ENCODE measurements at regions of chr16 and their contacts with region 1.

Region 1: GRCh38 chr16:47141773-47142485 is 1.8 kb downstream of the NETO2 start:
- DNase-seq: peak; percentile 87
- ATAC-seq: peak; percentile 55
- H3K4me3 ChIP-seq: peak overlapping the region; percentile 42 to 81 (median 64)
- H3K4me3 Mint-ChIP-seq: peak overlapping the region; percentile 94
- H3K27ac ChIP-seq: no peak overlapping the region
- H3K27ac Mint-ChIP-seq: peak overlapping the region; percentile 54
- H3K4me1 ChIP-seq: peaks cover 9 to 16% of the 10 kb centered on the region in 2 donors
- H3K4me1 Mint-ChIP-seq: peaks cover 19% of the 10 kb centered on the region
- H3K27me3 ChIP-seq: peaks cover 0 to 9% (median 0%) of the 10 kb centered on the region in 4 experiments
- H3K27me3 Mint-ChIP-seq: no peaks in the 10 kb centered on the region
- CTCF ChIP-seq: peak; percentile 96

Region 2: GRCh38 chr16:46765050-46765449 is 376.9 kb before region 1 on chr16:
- CTCF ChIA-PET with region 1: no interaction called
- POLR2A ChIA-PET with region 1: no interaction called
- intact Hi-C with region 1: no loop called
- DNase-seq: no peak
- ATAC-seq: no peak
- H3K4me3 ChIP-seq: no peak overlapping the region
- H3K4me3 Mint-ChIP-seq: no peak overlapping the region
- H3K27ac ChIP-seq: no peak overlapping the region
- H3K27ac Mint-ChIP-seq: no peak overlapping the region
- H3K4me1 ChIP-seq: peaks cover 0 to 14% of the 10 kb centered on the region in 2 donors
- H3K4me1 Mint-ChIP-seq: peaks cover 14% of the 10 kb centered on the region
- H3K27me3 ChIP-seq: no peaks in the 10 kb centered on the region
- H3K27me3 Mint-ChIP-seq: no peaks in the 10 kb centered on the region
- CTCF ChIP-seq: no peak

Region 3: DNA sequence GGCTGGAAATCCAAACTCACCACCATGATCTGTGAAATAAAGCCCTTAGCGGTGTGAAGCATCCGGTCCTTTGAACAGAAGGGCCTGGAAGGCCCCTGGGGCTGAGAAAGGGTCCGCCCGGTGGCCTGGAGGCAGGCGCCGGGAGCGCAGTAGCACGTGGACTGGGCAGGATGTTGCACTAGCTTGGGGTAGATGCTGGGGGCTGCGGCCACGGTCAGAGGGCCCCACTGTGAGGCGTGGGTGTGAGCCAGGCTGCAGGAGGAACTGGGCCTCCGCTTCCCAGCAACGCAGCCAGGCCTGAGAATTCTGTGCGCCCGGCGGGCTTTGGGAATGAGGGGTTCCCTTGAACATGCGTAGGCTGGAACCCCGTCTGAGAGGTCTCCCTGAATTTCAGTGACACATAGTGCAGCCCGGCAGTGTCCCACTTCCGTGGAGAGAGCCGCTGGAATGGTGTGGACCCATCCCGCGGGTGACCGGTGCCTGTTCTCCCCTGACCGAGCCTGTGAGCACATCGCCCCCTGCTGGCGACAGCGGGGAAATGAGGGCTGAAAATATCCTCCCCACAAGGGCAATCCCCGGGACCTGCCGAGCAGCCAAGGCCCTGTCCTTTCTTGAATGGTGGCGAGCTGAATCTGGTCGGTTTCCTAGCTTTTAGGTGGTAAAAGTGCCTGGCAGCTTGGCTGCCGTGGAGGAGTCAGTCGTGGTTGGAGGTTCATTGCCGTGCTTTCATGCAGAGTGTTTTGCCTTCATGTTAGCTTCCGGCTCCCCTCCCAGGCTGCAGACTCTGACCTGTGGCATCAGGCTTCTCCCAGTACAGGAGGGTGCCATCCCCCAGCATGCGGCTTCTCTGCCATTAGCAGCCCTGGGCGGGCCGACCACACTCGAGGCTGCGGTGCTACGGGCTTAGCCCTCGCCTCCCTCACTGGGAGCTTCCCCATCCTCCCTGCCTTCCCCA is 212.3 kb before region 1 on chr16:
- CTCF ChIA-PET with region 1: interaction called, 4 read pairs
- POLR2A ChIA-PET with region 1: no interaction called
- intact Hi-C with region 1: loop called (anchors 5 kb)
- DNase-seq: peak; percentile 76
- ATAC-seq: peak; percentile 73
- H3K4me3 ChIP-seq: no peak overlapping the region
- H3K4me3 Mint-ChIP-seq: no peak overlapping the region
- H3K27ac ChIP-seq: no peak overlapping the region
- H3K27ac Mint-ChIP-seq: no peak overlapping the region
- H3K4me1 ChIP-seq: peaks cover 5 to 18% of the 10 kb centered on the region in 2 donors
- H3K4me1 Mint-ChIP-seq: peaks cover 7% of the 10 kb centered on the region
- H3K27me3 ChIP-seq: no peaks in the 10 kb centered on the region
- H3K27me3 Mint-ChIP-seq: no peaks in the 10 kb centered on the region
- CTCF ChIP-seq: peak; percentile 96

Region 4: DNA sequence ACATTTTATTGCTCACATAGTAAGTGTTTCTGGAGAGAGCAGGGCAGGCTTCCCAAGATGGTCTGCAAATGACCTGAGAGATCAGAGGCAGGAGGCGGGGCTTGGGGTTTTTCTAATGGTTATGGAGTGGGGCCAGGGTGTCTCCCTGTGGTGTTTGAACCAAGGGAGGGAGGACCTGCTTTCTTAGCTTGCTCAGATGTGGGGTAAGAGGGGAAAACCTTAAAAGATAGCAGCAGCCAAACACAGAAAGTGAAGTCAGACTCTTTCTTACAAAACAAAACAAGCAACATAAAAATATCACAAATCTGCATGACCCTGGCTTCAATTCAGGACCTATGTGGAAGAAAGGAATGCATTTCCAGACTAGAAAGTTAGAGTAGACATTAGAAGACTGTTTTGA is 145.5 kb before region 1 on chr16:
- CTCF ChIA-PET with region 1: no interaction called
- POLR2A ChIA-PET with region 1: no interaction called
- intact Hi-C with region 1: no loop called
- DNase-seq: no peak
- ATAC-seq: no peak
- H3K4me3 ChIP-seq: no peak overlapping the region
- H3K4me3 Mint-ChIP-seq: no peak overlapping the region
- H3K27ac ChIP-seq: no peak overlapping the region
- H3K27ac Mint-ChIP-seq: no peak overlapping the region
- H3K4me1 ChIP-seq: no peaks in the 10 kb centered on the region
- H3K4me1 Mint-ChIP-seq: no peaks in the 10 kb centered on the region
- H3K27me3 ChIP-seq: peaks cover 0 to 7% (median 0%) of the 10 kb centered on the region in 4 experiments
- H3K27me3 Mint-ChIP-seq: no peaks in the 10 kb centered on the region
- CTCF ChIP-seq: no peak

Region 5: DNA sequence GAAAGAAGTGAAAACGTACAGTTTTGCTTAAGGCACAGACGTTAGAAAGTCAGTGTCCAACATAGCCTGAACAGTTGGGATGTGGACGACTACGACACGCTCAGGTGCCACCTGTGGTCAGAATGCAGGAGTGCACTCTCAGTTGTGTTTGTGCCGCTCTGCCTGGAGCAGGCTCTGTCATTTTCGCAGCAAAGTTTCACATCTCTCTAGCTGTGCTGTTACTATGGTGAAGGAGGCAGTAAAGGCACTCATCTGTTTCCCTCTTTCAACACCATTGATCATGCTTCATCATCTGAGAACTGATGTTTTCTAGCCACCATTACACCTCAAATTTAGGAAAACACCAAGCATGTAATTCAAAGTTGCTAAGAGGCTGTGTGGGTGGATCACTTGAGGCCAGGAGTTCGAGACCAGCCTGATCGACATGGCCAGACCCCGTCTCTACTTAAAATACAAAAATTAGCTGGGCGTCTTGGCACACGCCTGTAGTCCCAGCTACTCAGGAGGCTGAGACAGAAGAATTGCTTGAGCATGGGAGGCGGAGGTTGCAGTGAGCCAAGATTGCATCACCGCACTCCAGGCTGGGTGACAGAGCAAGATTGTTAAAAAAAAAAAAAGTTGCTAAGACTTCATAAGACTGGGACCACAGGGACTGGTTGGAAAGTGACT is 123.6 kb before region 1 on chr16:
- CTCF ChIA-PET with region 1: interaction called, 9 read pairs
- POLR2A ChIA-PET with region 1: no interaction called
- intact Hi-C with region 1: loop called (anchors 2 kb)
- DNase-seq: peak; percentile 91
- ATAC-seq: peak; percentile 99
- H3K4me3 ChIP-seq: no peak overlapping the region
- H3K4me3 Mint-ChIP-seq: peak overlapping the region; percentile 62
- H3K27ac ChIP-seq: peak overlapping the region; percentile 55 to 65
- H3K27ac Mint-ChIP-seq: peak overlapping the region; percentile 58
- H3K4me1 ChIP-seq: peaks cover 23 to 29% of the 10 kb centered on the region in 2 donors
- H3K4me1 Mint-ChIP-seq: peaks cover 24% of the 10 kb centered on the region
- H3K27me3 ChIP-seq: no peaks in the 10 kb centered on the region
- H3K27me3 Mint-ChIP-seq: no peaks in the 10 kb centered on the region
- CTCF ChIP-seq: peak; percentile 78

Region 6: GRCh38 chr16:47250983-47251382 is 109.1 kb after region 1 on chr16:
- CTCF ChIA-PET with region 1: no interaction called
- POLR2A ChIA-PET with region 1: no interaction called
- intact Hi-C with region 1: no loop called
- DNase-seq: no peak
- ATAC-seq: no peak
- H3K4me3 ChIP-seq: no peak overlapping the region
- H3K4me3 Mint-ChIP-seq: no peak overlapping the region
- H3K27ac ChIP-seq: no peak overlapping the region
- H3K27ac Mint-ChIP-seq: no peak overlapping the region
- H3K4me1 ChIP-seq: no peaks in the 10 kb centered on the region
- H3K4me1 Mint-ChIP-seq: no peaks in the 10 kb centered on the region
- H3K27me3 ChIP-seq: no peaks in the 10 kb centered on the region
- H3K27me3 Mint-ChIP-seq: no peaks in the 10 kb centered on the region
- CTCF ChIP-seq: no peak

Region 7: DNA sequence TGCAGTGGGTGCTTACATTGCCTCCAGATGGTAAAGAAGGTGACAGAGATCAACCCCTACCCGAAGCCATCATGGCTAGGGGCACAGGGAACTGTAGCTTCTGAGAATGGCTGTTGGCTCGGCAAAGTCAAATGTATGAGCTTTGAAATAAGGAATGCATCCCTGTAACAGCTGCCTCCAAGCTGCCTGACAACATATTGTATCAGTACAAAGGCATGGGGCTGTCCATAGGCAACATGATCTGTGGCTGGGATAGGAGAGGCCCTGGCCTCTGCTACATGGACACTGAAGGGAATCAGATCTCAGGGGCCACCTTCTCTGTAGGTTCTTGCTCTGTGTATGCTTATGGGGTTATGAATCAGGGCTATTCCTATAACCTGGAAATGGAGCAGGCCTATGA is 121.0 kb after region 1 on chr16:
- CTCF ChIA-PET with region 1: no interaction called
- POLR2A ChIA-PET with region 1: no interaction called
- intact Hi-C with region 1: loop called (anchors 5 kb)
- DNase-seq: no peak
- ATAC-seq: no peak
- H3K4me3 ChIP-seq: no peak overlapping the region
- H3K4me3 Mint-ChIP-seq: no peak overlapping the region
- H3K27ac ChIP-seq: no peak overlapping the region
- H3K27ac Mint-ChIP-seq: no peak overlapping the region
- H3K4me1 ChIP-seq: no peaks in the 10 kb centered on the region
- H3K4me1 Mint-ChIP-seq: no peaks in the 10 kb centered on the region
- H3K27me3 ChIP-seq: no peaks in the 10 kb centered on the region
- H3K27me3 Mint-ChIP-seq: no peaks in the 10 kb centered on the region
- CTCF ChIP-seq: no peak

Region 8: DNA sequence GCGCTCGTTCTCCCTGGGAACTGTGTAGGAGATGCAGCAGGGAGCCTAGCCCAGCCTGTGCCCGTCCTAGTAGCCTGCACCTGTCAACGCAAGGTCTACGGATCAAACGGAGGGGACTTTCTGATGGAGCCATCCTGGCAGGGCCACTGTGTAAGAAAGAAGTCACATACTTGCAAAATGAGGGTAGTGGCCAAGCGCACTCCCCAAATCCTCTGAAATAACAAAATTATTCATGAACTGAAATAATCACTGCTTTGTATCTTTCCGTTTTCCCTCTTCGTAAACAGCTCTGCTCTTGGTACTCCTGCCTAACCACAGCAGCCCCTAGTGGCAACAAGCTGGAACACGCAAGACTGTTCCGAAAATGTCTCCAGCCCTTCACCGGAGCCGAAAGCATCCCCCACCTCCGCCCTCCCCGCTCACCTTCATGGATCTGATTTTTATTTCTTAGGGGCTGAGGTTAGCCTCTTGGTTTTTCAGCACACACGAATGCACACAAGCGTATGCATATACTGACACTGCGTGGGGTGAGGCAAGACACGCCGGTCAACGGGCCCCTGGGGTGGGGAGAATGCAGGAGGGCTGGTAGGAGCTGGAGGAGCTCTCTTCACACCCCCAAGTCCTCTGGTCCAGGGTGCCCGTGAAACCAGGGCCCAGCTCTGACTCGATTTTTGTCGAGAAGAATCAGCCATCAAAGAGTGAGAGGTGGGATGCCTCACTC is 913.1 kb after region 1 on chr16:
- CTCF ChIA-PET with region 1: interaction called, 18 read pairs
- POLR2A ChIA-PET with region 1: no interaction called
- intact Hi-C with region 1: no loop called
- DNase-seq: peak; percentile 49
- ATAC-seq: no peak
- H3K4me3 ChIP-seq: no peak overlapping the region
- H3K4me3 Mint-ChIP-seq: no peak overlapping the region
- H3K27ac ChIP-seq: no peak overlapping the region
- H3K27ac Mint-ChIP-seq: no peak overlapping the region
- H3K4me1 ChIP-seq: peaks cover 0 to 6% of the 10 kb centered on the region in 2 donors
- H3K4me1 Mint-ChIP-seq: peaks cover 6% of the 10 kb centered on the region
- H3K27me3 ChIP-seq: peaks cover 0 to 7% (median 3%) of the 10 kb centered on the region in 4 experiments
- H3K27me3 Mint-ChIP-seq: peaks cover 41% of the 10 kb centered on the region
- CTCF ChIP-seq: peak; percentile 66

Region 9: DNA sequence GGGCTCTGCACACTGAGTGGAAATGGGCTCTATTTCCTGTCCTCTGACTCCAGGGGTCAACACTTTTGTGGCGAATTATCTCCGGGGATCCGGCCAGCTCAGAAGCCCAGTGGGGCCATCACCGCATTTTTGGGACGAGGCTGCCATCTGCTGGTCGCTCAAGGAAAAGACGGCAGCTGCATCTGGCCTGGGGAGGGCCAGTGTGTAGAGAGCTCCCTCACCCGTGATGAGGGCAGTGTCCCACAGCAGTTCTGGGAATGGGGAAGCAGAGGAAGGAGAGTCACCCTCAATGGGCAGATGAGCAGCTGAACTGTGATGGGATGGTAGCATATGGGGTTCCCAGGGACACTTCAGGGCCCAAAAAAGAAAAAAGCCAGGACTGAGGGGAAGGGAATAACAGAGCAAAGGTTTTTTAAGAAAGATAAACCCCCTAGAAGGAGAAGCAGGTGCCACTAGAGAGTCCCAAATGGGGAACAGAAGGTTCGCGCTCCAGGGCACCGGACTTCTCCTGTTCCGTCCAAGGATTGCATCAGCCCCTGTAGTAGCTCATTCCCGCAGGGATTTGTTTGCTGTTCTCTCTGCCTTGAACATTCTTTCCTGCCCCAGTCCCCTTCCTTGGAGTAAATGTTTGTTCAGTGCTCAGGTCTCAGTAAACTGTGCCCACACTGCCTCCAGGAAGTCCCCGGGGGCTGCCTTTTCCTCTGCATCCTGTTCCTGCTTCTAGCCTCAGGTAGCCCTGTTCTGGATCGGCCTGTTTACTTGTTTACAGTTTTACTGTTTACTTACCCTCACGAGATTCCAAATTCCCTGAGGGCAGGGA is 1023.2 kb after region 1 on chr16:
- CTCF ChIA-PET with region 1: interaction called, 60 read pairs
- POLR2A ChIA-PET with region 1: no interaction called
- intact Hi-C with region 1: loop called (anchors 2 kb)
- DNase-seq: peak; percentile 75
- ATAC-seq: peak; percentile 90
- H3K4me3 ChIP-seq: no peak overlapping the region
- H3K4me3 Mint-ChIP-seq: no peak overlapping the region
- H3K27ac ChIP-seq: no peak overlapping the region
- H3K27ac Mint-ChIP-seq: peak overlapping the region; percentile 27
- H3K4me1 ChIP-seq: peaks cover 0 to 2% of the 10 kb centered on the region in 2 donors
- H3K4me1 Mint-ChIP-seq: peaks cover 3% of the 10 kb centered on the region
- H3K27me3 ChIP-seq: no peaks in the 10 kb centered on the region
- H3K27me3 Mint-ChIP-seq: no peaks in the 10 kb centered on the region
- CTCF ChIP-seq: peak; percentile 90